ENCODE measurements at regions of chrX and their contacts with region 1.

Region 1: DNA sequence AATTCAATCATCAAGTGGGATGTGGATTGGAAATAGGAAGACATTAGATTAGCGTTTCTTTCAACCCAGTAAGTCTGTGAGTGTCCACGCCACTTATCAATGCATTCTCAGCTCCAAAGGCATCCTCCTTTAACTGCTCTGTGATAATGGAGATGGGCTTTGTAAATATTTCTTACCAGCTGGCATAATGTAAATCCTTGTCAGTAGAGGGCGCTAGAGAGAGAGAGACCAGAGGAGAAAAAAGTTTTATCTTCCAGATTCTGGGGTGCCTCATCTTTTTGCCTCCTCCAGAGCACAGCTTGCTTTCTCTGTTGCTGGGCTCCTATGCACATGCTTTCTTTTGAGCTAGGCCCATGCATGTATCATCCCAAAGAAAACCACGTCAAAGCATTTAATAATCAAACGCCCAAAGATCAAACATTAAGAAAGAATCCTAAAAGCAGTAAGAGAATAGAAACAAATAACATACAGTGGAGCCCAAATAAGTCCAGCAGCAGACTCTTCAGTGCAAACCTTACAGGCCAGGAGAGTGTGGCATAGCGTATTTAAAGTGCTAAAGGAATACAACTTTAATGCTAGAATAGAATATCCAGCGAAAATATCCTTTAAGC is 9.6 kb upstream of the MTMR1 start:
- DNase-seq: peak; percentile 12
- ATAC-seq: peak; percentile 69
- H3K4me3 ChIP-seq: no peak overlapping the region
- H3K27ac ChIP-seq: no peak overlapping the region
- H3K4me1 ChIP-seq: peaks cover 0 to 3% of the 10 kb centered on the region in 2 experiments; a peak in 2 of 4 replicates
- H3K27me3 ChIP-seq: no peaks in the 10 kb centered on the region
- CTCF ChIP-seq: peak; percentile 39 to 61 (median 55); a peak in 5 of 6 replicates
- POLR2A ChIP-seq: no peak
- RAD21 ChIP-seq: peak; percentile 44

Region 2: GRCh38 chrX:149950681-149951080 is 733.0 kb before region 1 on chrX:
- CTCF ChIA-PET with region 1: interaction called, 3 read pairs
- POLR2A ChIA-PET with region 1: no interaction called
- RAD21 ChIA-PET with region 1: no interaction called
- intact Hi-C with region 1: loop called (anchors 2 kb)
- DNase-seq: peak; percentile 45
- ATAC-seq: peak; percentile 83
- H3K4me3 ChIP-seq: no peak overlapping the region
- H3K27ac ChIP-seq: no peak overlapping the region
- H3K4me1 ChIP-seq: no peaks in the 10 kb centered on the region
- H3K27me3 ChIP-seq: no peaks in the 10 kb centered on the region
- CTCF ChIP-seq: peak; percentile 59 to 63 (median 61); a peak in 5 of 6 replicates
- POLR2A ChIP-seq: no peak
- RAD21 ChIP-seq: peak; percentile 63

Region 3: GRCh38 chrX:150365051-150365989 is 318.3 kb before region 1 on chrX:
- CTCF ChIA-PET with region 1: no interaction called
- POLR2A ChIA-PET with region 1: no interaction called
- RAD21 ChIA-PET with region 1: no interaction called
- intact Hi-C with region 1: loop called (anchors 5 kb)
- DNase-seq: peak; percentile 35
- ATAC-seq: peak; percentile 63
- H3K4me3 ChIP-seq: peak overlapping the region; percentile 55 to 64
- H3K27ac ChIP-seq: no peak overlapping the region
- H3K4me1 ChIP-seq: peaks cover 2 to 10% of the 10 kb centered on the region in 2 experiments; a peak in 1 of 4 replicates
- H3K27me3 ChIP-seq: no peaks in the 10 kb centered on the region
- CTCF ChIP-seq: peak in 2 of 3 experiments; percentile 40 to 55; a peak in 4 of 6 replicates
- POLR2A ChIP-seq: no peak
- RAD21 ChIP-seq: no peak

Region 4: GRCh38 chrX:150547375-150548115 is 136.1 kb before region 1 on chrX:
- CTCF ChIA-PET with region 1: no interaction called
- POLR2A ChIA-PET with region 1: no interaction called
- RAD21 ChIA-PET with region 1: no interaction called
- intact Hi-C with region 1: loop called (anchors 10 kb)
- DNase-seq: no peak
- ATAC-seq: no peak
- H3K4me3 ChIP-seq: no peak overlapping the region
- H3K27ac ChIP-seq: no peak overlapping the region
- H3K4me1 ChIP-seq: peaks cover 0 to 7% of the 10 kb centered on the region in 2 experiments; a peak in 1 of 4 replicates
- H3K27me3 ChIP-seq: no peaks in the 10 kb centered on the region
- CTCF ChIP-seq: no peak
- POLR2A ChIP-seq: no peak
- RAD21 ChIP-seq: no peak

Region 5: GRCh38 chrX:150715184-150715583 is 31.5 kb after region 1 on chrX:
- CTCF ChIA-PET with region 1: interaction called, 4 read pairs
- POLR2A ChIA-PET with region 1: no interaction called
- RAD21 ChIA-PET with region 1: no interaction called
- intact Hi-C with region 1: loop called (anchors 2 kb)
- DNase-seq: no peak
- ATAC-seq: no peak
- H3K4me3 ChIP-seq: no peak overlapping the region
- H3K27ac ChIP-seq: no peak overlapping the region
- H3K4me1 ChIP-seq: no peaks in the 10 kb centered on the region
- H3K27me3 ChIP-seq: no peaks in the 10 kb centered on the region
- CTCF ChIP-seq: no peak
- POLR2A ChIP-seq: no peak
- RAD21 ChIP-seq: no peak